Colonic mucosa (tissue), 4 donors: ENCODE measurements at regions of chr10 and their contacts with region 1.

Region 1: GRCh38 chr10:58384999-58385783 is at the start of gene TFAM:
- DNase-seq: peak; percentile 98
- H3K4me3 ChIP-seq: peak within 1 kb of the TSS; percentile 94
- H3K27ac ChIP-seq: peak within 1 kb of the TSS; percentile 69
- H3K4me1 ChIP-seq: peaks cover 10% of the 10 kb centered on the region
- H3K27me3 ChIP-seq: no peaks in the 10 kb centered on the region
- CTCF ChIP-seq: peak; percentile 51
- total RNA-seq, gene TFAM: 52.6 to 63.1 TPM

Region 2: GRCh38 chr10:58177362-58177947 is 207.7 kb before region 1 on chr10:
- intact Hi-C with region 1: loop called (anchors 10 kb)
- DNase-seq: no peak
- H3K4me3 ChIP-seq: no peak overlapping the region
- H3K27ac ChIP-seq: no peak overlapping the region
- H3K4me1 ChIP-seq: no peaks in the 10 kb centered on the region
- H3K27me3 ChIP-seq: no peaks in the 10 kb centered on the region
- CTCF ChIP-seq: peak; percentile 53

Region 3: DNA sequence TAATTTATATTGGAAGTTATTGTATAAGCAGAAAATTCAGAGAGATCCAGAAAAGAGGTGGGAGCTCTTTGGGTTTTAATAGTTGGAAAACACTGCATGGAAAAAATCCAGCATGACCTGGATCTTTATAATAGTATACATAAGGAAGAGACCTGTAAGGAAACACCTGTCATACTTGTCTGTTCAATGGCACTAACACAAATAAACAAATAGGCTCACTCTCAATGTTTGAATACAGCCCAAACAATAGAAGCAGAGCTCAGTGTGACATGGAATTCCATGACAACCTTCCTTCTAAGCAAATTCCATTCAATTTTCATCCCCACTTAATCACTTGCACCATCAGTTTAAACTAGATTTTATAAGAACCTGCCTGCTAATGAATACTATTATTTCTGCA is 84.5 kb before region 1 on chr10:
- intact Hi-C with region 1: loop called (anchors 5 kb)
- DNase-seq: no peak
- H3K4me3 ChIP-seq: no peak overlapping the region
- H3K27ac ChIP-seq: no peak overlapping the region
- H3K4me1 ChIP-seq: peaks cover 1% of the 10 kb centered on the region
- H3K27me3 ChIP-seq: no peaks in the 10 kb centered on the region
- CTCF ChIP-seq: no peak

Region 4: GRCh38 chr10:58334817-58335305 is 50.3 kb before region 1 on chr10 and contains the start of gene UBE2D1:
- intact Hi-C with region 1: loop called (anchors 10 kb)
- DNase-seq: peak; percentile 94
- H3K4me3 ChIP-seq: peak within 1 kb of the TSS; percentile 90
- H3K27ac ChIP-seq: peak within 1 kb of the TSS; percentile 83
- H3K4me1 ChIP-seq: no peaks in the 10 kb centered on the region
- H3K27me3 ChIP-seq: no peaks in the 10 kb centered on the region
- CTCF ChIP-seq: no peak
- total RNA-seq, gene UBE2D1: 14.6 to 18.4 TPM